Ascending aorta (tissue), 2 donors: ENCODE measurements at regions of chr16 and their contacts with region 1.

Region 1: GRCh38 chr16:89873972-89874689 is 739 bp downstream of the TCF25 start:
- DNase-seq: peak; percentile 74 to 97
- H3K4me3 ChIP-seq: peak overlapping the region; percentile 70 to 87
- H3K27ac ChIP-seq: peak overlapping the region; percentile 98 to 100
- H3K4me1 ChIP-seq: peaks cover 0 to 9% of the 10 kb centered on the region in 2 donors
- H3K27me3 ChIP-seq: no peaks in the 10 kb centered on the region
- CTCF ChIP-seq: no peak

Region 2: DNA sequence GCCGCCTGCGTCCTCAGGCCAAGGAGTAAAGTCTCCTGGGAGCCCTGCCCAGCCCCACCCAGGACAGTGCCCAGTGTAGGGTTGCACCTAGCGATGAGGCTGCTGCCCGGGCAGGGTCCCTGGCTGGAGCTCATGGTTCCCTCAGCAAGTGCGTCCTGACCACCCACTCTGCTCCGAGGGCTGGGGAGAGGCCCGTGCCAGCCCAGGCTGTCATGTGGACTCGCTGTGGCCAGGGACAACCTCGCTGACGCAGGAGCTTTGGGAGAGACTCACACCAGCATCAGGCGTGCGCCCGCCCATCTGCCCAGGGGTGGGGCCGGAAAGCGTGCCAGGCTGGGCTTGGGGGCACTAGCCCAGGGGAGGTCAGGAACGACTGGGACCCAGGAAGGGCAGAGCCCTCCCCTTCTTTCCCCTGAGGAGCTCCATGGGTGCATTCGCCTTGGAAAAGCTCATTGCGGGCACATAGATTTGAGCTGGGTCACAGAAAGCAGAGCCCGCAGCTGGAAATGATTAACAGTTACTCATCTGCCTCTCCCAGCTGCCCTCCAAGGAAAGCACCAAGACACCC is 241.0 kb before region 1 on chr16:
- intact Hi-C with region 1: no loop called
- DNase-seq: no peak
- H3K4me3 ChIP-seq: no peak overlapping the region
- H3K27ac ChIP-seq: no peak overlapping the region
- H3K4me1 ChIP-seq: no peaks in the 10 kb centered on the region
- H3K27me3 ChIP-seq: no peaks in the 10 kb centered on the region
- CTCF ChIP-seq: no peak

Region 3: DNA sequence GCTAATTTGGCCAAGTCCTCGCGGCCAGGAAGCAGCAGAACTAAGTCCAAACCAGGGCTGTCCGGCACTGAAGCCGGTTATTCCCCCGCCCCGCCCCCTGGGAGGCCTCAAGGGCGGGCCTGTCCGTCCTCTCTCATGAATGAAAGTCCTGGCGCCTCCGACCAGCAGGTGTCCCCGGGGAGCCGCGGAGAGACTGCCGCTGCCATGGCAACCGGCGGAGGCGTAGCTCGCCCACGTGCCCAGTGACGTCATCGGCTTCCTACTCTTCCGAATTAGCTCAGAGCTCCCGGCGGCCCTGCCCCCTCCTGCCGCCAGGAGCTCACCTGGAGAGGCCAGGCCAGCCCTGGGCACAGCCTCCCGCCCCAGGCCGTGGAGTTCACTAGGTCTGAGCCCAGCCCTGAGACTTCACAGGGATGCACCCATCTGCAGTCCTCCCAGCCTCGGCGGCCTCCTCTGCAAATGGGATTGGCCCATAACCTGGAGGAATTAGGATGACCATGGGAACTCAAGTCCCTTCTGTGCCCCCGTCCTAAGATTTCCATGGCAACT is 174.0 kb before region 1 on chr16:
- intact Hi-C with region 1: loop called (anchors 2 kb)
- DNase-seq: peak; percentile 96 to 99
- H3K4me3 ChIP-seq: peak overlapping the region; percentile 76 to 77
- H3K27ac ChIP-seq: peak overlapping the region; percentile 88 to 93
- H3K4me1 ChIP-seq: peaks cover 7 to 20% of the 10 kb centered on the region in 2 donors
- H3K27me3 ChIP-seq: no peaks in the 10 kb centered on the region
- CTCF ChIP-seq: peak; percentile 59 to 83 (median 63)

Region 4: DNA sequence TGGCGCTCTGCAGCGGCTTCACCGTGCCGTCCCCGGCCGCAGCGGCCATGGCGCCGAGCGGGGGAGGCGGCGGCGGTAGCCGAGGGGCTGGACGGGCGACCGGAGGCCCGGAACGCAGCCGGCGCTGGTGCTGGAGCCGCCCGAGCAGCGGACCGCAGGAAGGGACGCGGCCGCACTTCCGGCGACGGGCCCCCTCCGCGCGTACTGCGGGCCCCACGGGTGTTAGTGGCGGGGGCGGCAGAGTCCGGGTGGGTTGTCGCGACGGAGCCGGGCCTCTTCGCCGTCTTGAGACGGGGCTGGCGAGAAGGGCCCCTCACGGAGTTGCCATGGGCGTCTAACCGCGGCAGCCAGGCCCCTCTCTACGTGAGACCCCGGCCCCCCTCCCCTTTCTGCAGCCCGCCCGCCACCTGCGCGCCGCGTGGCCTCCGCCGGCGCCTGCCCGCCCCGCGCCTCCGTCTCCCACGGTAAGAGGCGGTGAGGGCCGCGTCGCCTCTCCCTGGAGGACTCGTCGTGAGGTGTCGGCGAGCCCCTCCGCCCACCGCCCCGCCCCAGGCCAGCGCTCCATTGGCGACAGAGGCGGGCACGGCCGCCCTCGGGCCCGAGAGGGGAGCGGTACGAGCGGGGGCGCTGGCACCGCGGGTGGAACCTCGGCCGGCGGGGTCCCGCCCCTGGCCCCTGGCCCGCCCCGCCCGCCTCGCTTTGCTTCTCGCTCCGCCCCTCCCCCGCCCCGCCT is 153.2 kb before region 1 on chr16 and contains the starts of genes VPS9D1 and ZNF276:
- intact Hi-C with region 1: loop called (anchors 2 kb)
- DNase-seq: peak in 1 of 2 donors; percentile 84
- H3K4me3 ChIP-seq: peak within 1 kb of the TSS; percentile 90 to 91
- H3K27ac ChIP-seq: peak within 1 kb of the TSS; percentile 95 to 97
- H3K4me1 ChIP-seq: peaks cover 11 to 19% of the 10 kb centered on the region in 2 donors
- H3K27me3 ChIP-seq: no peaks in the 10 kb centered on the region
- CTCF ChIP-seq: no peak
- total RNA-seq, gene VPS9D1: 17.2 TPM
- total RNA-seq, gene ZNF276: 30.7 TPM

Region 5: GRCh38 chr16:89815639-89816348 is 58.3 kb before region 1 on chr16:
- intact Hi-C with region 1: loop called (anchors 2 kb)
- DNase-seq: no peak
- H3K4me3 ChIP-seq: peak overlapping the region; percentile 71 to 79
- H3K27ac ChIP-seq: no peak overlapping the region
- H3K4me1 ChIP-seq: peaks cover 6 to 7% of the 10 kb centered on the region in 2 donors
- H3K27me3 ChIP-seq: no peaks in the 10 kb centered on the region
- CTCF ChIP-seq: no peak

Region 6: DNA sequence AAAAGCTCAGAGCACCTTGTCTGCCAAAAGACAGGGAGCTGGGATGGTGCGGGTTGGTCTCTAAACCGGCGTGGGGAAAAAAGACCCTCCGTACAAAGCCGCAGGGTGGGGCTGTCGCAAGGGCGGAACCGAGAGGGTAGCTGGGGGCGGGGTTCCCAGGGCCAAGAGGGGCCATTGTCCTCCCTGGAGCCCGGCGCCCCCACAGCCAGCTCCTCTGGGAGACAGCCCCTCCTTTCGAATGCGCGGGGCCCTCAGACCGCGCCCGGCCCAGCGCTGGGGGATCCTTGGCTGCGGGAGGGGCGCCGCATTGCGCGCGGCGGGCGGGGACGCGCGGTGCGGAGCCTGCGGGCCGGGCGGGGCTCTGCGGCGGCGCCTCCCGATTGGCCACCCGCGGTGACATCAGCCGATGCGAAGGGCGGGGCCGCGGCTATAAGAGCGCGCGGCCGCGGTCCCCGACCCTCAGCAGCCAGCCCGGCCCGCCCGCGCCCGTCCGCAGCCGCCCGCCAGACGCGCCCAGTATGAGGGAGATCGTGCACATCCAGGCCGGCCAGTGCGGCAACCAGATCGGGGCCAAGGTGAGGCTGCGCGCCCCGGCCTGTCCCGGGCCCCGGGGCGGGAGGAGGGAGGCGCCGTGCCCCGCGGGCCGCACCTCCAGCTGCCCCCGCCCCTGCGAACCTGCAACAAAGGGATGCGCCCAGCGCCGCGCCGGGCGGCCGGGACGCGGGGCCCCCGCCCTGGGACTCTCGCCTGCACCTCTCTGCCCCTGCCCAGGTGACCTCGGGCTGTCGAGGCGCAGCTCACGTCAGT is 49.0 kb after region 1 on chr16 and contains the start of gene TUBB3:
- intact Hi-C with region 1: loop called (anchors 2 kb)
- DNase-seq: no peak
- H3K4me3 ChIP-seq: peak within 1 kb of the TSS; percentile 64 to 67
- H3K27ac ChIP-seq: peak within 1 kb of the TSS; percentile 85
- H3K4me1 ChIP-seq: peaks cover 25 to 40% of the 10 kb centered on the region in 2 donors
- H3K27me3 ChIP-seq: peaks cover 7% of the 10 kb centered on the region
- CTCF ChIP-seq: no peak
- total RNA-seq, gene TUBB3: 2.3 TPM

Region 7: GRCh38 chr16:89972244-89973234 is 98.4 kb after region 1 on chr16:
- intact Hi-C with region 1: loop called (anchors 1 kb)
- DNase-seq: peak; percentile 47 to 93
- H3K4me3 ChIP-seq: peak overlapping the region; percentile 81 to 87
- H3K27ac ChIP-seq: peak overlapping the region; percentile 93 to 94
- H3K4me1 ChIP-seq: peaks cover 11 to 13% of the 10 kb centered on the region in 2 donors
- H3K27me3 ChIP-seq: no peaks in the 10 kb centered on the region
- CTCF ChIP-seq: no peak

Region 8: DNA sequence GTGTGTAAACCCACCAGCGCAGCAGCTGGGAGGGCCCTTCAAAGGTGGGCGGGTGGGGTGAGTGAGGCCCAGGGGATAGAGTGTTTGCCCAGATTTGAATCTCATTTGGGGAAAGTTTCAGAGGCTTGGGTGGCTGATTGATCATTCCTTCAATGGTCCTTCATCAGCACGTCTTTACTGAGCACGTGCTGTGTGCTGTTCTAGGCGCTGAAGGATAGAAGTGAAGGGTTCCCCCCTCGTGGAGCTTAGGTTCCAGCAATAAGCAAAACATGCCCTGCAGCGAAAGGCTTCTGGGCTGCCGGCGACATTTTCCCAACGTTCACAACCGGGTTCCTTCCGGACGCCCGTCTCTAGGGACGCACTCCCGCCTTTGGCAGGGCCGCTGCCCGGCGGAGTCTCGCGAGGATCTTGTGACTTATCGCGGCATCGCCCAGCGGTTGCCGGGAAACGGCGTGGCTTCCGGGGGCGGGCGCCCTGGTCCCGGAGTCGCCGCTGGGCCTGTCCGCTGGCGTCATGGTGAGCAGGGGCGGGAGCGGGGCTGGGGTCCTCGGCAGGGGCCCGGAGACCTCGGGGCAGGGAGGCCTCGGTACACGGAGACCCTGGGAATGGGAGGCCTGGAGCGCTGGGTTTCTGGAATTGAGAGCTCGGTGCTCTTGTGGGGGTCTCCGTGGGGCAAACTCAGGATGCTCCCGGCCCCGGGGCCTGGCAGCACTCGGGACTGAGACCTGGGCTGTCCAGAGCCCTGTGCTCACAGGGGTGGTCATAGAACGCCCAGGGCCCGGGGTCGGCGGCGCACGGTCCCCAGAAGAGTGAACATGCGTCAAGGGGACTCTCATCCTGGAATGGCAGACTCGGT is 148.3 kb after region 1 on chr16:
- intact Hi-C with region 1: loop called (anchors 5 kb)
- DNase-seq: peak; percentile 39 to 96
- H3K4me3 ChIP-seq: peak overlapping the region; percentile 80 to 95
- H3K27ac ChIP-seq: peak overlapping the region; percentile 68 to 69
- H3K4me1 ChIP-seq: peaks cover 12 to 40% of the 10 kb centered on the region in 2 donors
- H3K27me3 ChIP-seq: no peaks in the 10 kb centered on the region
- CTCF ChIP-seq: no peak